ENCODE measurements at regions of chr7 and their contacts with region 1.

Region 1: DNA sequence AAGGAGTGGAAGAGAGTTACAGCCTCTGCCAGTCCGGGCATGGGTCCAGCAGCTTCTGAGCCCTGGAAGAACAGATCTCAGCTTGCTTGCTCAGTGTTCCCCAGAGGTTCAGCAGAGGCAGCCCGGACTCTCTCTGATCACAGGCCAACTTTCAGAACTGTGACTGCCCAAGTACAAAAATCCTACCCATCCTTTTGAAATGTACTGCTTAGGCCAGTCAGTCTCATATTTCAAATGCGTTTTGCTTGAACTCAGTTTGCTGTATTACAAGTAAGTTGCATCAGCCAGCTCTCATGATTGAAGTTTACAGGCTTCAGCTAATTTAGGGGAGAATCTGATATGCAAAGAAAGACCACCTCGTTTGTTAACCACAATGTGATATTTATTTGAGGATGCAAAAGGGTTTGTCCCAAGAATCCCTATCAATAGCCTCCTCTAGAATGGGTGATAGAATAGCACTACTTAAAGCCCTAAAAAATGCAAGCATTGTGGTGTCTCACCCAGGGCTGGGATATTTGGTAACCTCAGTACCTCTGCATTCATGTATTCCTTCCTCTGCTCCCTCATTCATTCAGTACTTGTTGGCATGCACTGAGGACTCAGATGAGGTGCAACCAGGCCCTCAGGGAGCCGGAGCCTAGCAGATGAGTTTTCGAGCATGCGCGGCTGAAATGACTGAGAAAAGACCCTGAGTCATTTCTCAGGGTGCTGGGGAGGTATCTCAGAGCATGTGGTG is 7.0 kb downstream of the AIMP2 start:
- DNase-seq: peak; percentile 95
- ATAC-seq: peak; percentile 89
- H3K4me3 ChIP-seq: no peak overlapping the region
- H3K27ac ChIP-seq: peak overlapping the region; percentile 98
- H3K4me1 ChIP-seq: peaks cover 11% of the 10 kb centered on the region
- H3K27me3 ChIP-seq: no peaks in the 10 kb centered on the region
- CTCF ChIP-seq: no peak
- POLR2A ChIP-seq: no peak
- RAD21 ChIP-seq: no peak

Region 2: GRCh38 chr7:5766321-5766761 is 249.7 kb before region 1 on chr7:
- CTCF ChIA-PET with region 1: no interaction called
- POLR2A ChIA-PET with region 1: no interaction called
- dilution Hi-C with region 1: no loop called
- in situ Hi-C with region 1: no loop called
- intact Hi-C with region 1: no loop called
- DNase-seq: peak; percentile 81
- ATAC-seq: peak; percentile 70
- H3K4me3 ChIP-seq: no peak overlapping the region
- H3K27ac ChIP-seq: peak overlapping the region; percentile 79
- H3K4me1 ChIP-seq: peaks cover 21% of the 10 kb centered on the region
- H3K27me3 ChIP-seq: no peaks in the 10 kb centered on the region
- CTCF ChIP-seq: no peak
- POLR2A ChIP-seq: no peak
- RAD21 ChIP-seq: no peak

Region 3: DNA sequence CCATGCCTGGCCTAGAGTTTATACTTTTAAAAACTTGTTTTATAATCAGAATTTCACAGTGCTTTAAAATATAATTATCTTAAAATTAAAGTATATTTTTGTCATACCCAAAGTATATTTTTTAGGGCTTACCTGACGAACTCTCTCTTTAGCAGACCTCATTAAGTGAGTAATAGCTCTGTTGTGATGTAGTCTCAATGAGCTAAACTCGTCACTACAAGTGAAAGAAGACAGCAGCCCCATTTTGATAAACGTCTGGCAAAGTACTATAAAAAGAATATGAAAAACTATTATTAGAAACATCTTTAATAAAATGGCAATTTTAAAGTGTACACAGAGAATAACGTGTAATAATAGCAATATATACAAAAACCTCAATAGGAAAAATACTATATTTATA is 33.7 kb after region 1 on chr7:
- CTCF ChIA-PET with region 1: no interaction called
- POLR2A ChIA-PET with region 1: no interaction called
- dilution Hi-C with region 1: no loop called
- in situ Hi-C with region 1: no loop called
- intact Hi-C with region 1: loop called (anchors 5 kb)
- DNase-seq: no peak
- ATAC-seq: no peak
- H3K4me3 ChIP-seq: no peak overlapping the region
- H3K27ac ChIP-seq: no peak overlapping the region
- H3K4me1 ChIP-seq: no peaks in the 10 kb centered on the region
- H3K27me3 ChIP-seq: no peaks in the 10 kb centered on the region
- CTCF ChIP-seq: no peak
- POLR2A ChIP-seq: no peak
- RAD21 ChIP-seq: no peak

Measured in IMR-90 (cell line).